Activated CD4-positive, alpha-beta T cell treated with anti-CD3 and anti-CD28 coated beads for 36 hours (primary cell): ENCODE measurements at regions of chr5 and their contacts with region 1.

Region 1: DNA sequence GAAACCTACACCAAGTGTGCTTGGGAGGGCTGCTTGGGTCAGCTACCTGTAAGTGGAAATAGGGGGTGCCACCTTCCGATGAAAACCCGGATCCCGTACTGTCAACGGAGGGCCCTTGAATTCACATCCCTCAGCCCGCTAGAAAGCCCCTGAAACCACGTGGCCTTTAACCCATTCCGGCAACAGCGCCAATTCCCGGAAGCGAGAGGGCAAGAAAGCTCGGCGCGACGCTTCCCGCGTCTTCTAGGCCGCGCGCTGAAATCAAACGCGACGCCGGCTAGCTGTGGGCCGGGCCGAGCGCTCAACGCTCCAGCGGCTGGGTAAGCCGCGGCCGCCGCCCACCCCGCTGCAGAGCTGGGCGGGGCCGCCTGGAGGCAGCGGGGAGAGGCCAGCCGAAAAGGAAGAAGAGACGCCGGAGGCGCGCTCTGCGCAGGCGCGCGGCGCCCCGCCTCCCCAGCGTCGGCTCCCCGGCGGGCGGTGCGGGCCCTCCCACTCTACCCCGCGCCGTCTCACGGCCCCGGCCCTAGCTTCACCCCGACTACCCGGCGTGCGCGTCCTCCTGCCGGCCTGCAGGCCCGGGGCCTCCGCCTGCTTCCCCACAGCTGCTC is at the start of gene KIF2A:
- DNase-seq: peak; percentile 96
- ATAC-seq: peak; percentile 89
- H3K4me3 Mint-ChIP-seq: peak within 1 kb of the TSS; percentile 94
- H3K27ac Mint-ChIP-seq: peak within 1 kb of the TSS; percentile 99
- H3K4me1 Mint-ChIP-seq: peaks cover 54% of the 10 kb centered on the region
- H3K27me3 Mint-ChIP-seq: no peaks in the 10 kb centered on the region
- total RNA-seq, gene KIF2A: 224 to 306 TPM

Region 2: GRCh38 chr5:61162010-61162831 is 1143.6 kb before region 1 on chr5 and contains the start of gene SMIM15:
- CTCF ChIA-PET with region 1: no interaction called
- POLR2A ChIA-PET with region 1: no interaction called
- intact Hi-C with region 1: loop called in 1 of 2 experiments (anchors 5 kb)
- DNase-seq: peak; percentile 91
- ATAC-seq: peak; percentile 94
- H3K4me3 Mint-ChIP-seq: peak within 1 kb of the TSS; percentile 88
- H3K27ac Mint-ChIP-seq: peak within 1 kb of the TSS; percentile 95
- H3K4me1 Mint-ChIP-seq: peaks cover 35% of the 10 kb centered on the region
- H3K27me3 Mint-ChIP-seq: no peaks in the 10 kb centered on the region
- total RNA-seq, gene SMIM15: 73.5 to 84.0 TPM

Region 3: DNA sequence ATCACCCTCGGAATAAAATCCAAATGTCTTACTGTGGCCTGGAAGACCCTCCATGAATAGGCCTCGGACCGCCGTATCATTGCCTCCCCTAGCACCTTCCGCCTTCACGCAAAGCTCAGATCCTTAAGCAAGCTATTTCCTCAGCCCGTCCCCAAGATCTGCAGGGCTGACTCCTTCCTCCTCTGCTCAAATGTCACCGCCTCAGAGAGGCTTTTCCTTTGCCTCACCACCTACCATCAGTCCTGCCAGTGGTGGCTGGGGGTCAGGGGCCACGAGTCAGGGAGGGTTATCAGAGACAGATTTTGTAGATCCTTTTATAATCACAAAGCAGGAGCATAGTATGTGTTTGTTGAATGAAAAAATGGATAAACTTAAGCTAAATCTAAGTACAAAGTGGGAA is 74.2 kb before region 1 on chr5:
- CTCF ChIA-PET with region 1: no interaction called
- POLR2A ChIA-PET with region 1: no interaction called
- intact Hi-C with region 1: loop called in 1 of 2 experiments (anchors 10 kb)
- DNase-seq: no peak
- ATAC-seq: no peak
- H3K4me3 Mint-ChIP-seq: no peak overlapping the region
- H3K27ac Mint-ChIP-seq: no peak overlapping the region
- H3K4me1 Mint-ChIP-seq: peaks cover 18% of the 10 kb centered on the region
- H3K27me3 Mint-ChIP-seq: no peaks in the 10 kb centered on the region

Region 4: GRCh38 chr5:62268234-62268633 is 37.6 kb before region 1 on chr5:
- CTCF ChIA-PET with region 1: interaction called, 5 read pairs
- POLR2A ChIA-PET with region 1: interaction called, 11 read pairs
- intact Hi-C with region 1: no loop called
- DNase-seq: no peak
- ATAC-seq: peak; percentile 83
- H3K4me3 Mint-ChIP-seq: no peak overlapping the region
- H3K27ac Mint-ChIP-seq: peak overlapping the region; percentile 79
- H3K4me1 Mint-ChIP-seq: peaks cover 29% of the 10 kb centered on the region
- H3K27me3 Mint-ChIP-seq: no peaks in the 10 kb centered on the region

Region 5: DNA sequence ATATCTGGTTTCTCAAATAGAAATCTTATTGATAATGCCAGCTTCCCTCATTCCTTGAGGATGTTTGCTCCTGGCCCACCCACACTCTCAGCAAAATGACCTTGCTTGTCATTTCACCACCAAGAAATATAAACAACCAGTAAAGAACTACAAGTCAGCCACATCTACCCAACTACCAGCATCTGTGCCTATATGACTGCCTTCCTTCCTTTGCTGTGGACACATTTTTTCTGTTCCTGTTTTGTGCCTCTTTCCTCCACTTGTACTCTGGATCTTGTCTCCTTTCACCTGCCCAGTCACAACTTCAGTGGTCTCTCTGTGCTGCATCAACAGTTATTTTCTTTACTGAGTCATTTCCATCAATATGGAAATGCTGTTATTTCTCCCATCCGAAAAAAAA is 20.5 kb after region 1 on chr5:
- CTCF ChIA-PET with region 1: interaction called, 9 read pairs
- POLR2A ChIA-PET with region 1: interaction called, 4 read pairs
- intact Hi-C with region 1: loop called in 1 of 2 experiments (anchors 2 kb)
- DNase-seq: no peak
- ATAC-seq: peak; percentile 50
- H3K4me3 Mint-ChIP-seq: no peak overlapping the region
- H3K27ac Mint-ChIP-seq: peak overlapping the region; percentile 62
- H3K4me1 Mint-ChIP-seq: peaks cover 75% of the 10 kb centered on the region
- H3K27me3 Mint-ChIP-seq: no peaks in the 10 kb centered on the region

Region 6: GRCh38 chr5:62354028-62354874 is 48.4 kb after region 1 on chr5:
- CTCF ChIA-PET with region 1: interaction called, 14 read pairs
- POLR2A ChIA-PET with region 1: no interaction called
- intact Hi-C with region 1: no loop called
- DNase-seq: no peak
- ATAC-seq: peak; percentile 39
- H3K4me3 Mint-ChIP-seq: no peak overlapping the region
- H3K27ac Mint-ChIP-seq: no peak overlapping the region
- H3K4me1 Mint-ChIP-seq: peaks cover 8% of the 10 kb centered on the region
- H3K27me3 Mint-ChIP-seq: no peaks in the 10 kb centered on the region

Region 7: GRCh38 chr5:62412537-62413329 is 106.9 kb after region 1 on chr5 and contains the start of gene IPO11:
- CTCF ChIA-PET with region 1: no interaction called
- POLR2A ChIA-PET with region 1: interaction called, 7 read pairs
- intact Hi-C with region 1: loop called in 1 of 2 experiments (anchors 1 kb)
- DNase-seq: peak; percentile 99
- ATAC-seq: peak; percentile 99
- H3K4me3 Mint-ChIP-seq: peak within 1 kb of the TSS; percentile 90
- H3K27ac Mint-ChIP-seq: peak within 1 kb of the TSS; percentile 85
- H3K4me1 Mint-ChIP-seq: peaks cover 25% of the 10 kb centered on the region
- H3K27me3 Mint-ChIP-seq: no peaks in the 10 kb centered on the region
- total RNA-seq, gene IPO11: 57.2 to 69.9 TPM